ENCODE measurements at regions of chr6 and their contacts with region 1.

Region 1: DNA sequence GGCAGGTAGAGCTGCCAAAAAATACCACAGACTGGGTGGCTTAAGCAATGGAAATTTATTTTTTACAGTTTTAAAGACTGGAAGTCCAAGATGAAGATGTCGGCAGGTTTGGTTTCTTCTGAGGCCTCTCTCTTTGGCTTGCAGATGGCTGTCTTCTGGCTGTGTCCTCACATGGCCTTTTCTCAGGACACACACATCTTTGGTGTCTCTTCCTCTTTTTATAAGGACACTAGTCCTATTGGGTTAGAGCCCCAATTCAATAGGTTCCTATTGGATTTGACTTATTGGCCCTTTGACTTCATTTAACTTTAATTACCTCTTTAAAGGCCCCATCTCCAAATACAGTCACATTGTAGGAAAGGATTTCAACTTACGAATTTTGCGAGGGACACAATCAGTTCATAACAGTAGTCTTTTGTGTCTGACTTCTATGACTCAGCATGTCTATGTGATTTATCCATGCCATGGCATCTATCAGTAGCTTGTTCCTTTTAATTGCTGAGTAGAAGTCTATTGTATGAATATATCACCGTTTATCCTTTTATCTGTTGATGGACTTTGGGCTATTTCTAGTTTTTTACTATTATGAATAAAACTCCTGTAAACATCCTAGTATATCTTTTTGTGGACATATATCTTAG is 11.0 kb upstream of the TCP11 start:
- DNase-seq: no peak
- ATAC-seq: no peak
- H3K4me3 ChIP-seq: no peak overlapping the region
- H3K27ac ChIP-seq: no peak overlapping the region
- H3K4me1 ChIP-seq: no peaks in the 10 kb centered on the region
- H3K27me3 ChIP-seq: no peaks in the 10 kb centered on the region
- CTCF ChIP-seq: no peak

Region 2: GRCh38 chr6:34897130-34897529 is 255.1 kb before region 1 on chr6:
- CTCF ChIA-PET with region 1: no interaction called
- POLR2A ChIA-PET with region 1: interaction called, 15 read pairs
- in situ Hi-C with region 1: no loop called
- intact Hi-C with region 1: no loop called
- DNase-seq: no peak
- ATAC-seq: no peak
- H3K4me3 ChIP-seq: no peak overlapping the region
- H3K27ac ChIP-seq: no peak overlapping the region
- H3K4me1 ChIP-seq: peaks cover 6% of the 10 kb centered on the region; the same call in 1 of the 2 replicates
- H3K27me3 ChIP-seq: no peaks in the 10 kb centered on the region
- CTCF ChIP-seq: no peak

Region 3: GRCh38 chr6:34961574-34961973 is 190.6 kb before region 1 on chr6:
- CTCF ChIA-PET with region 1: no interaction called
- POLR2A ChIA-PET with region 1: interaction called, 10 read pairs
- in situ Hi-C with region 1: no loop called
- intact Hi-C with region 1: no loop called
- DNase-seq: no peak
- ATAC-seq: no peak
- H3K4me3 ChIP-seq: no peak overlapping the region
- H3K27ac ChIP-seq: no peak overlapping the region
- H3K4me1 ChIP-seq: no peaks in the 10 kb centered on the region
- H3K27me3 ChIP-seq: no peaks in the 10 kb centered on the region
- CTCF ChIP-seq: no peak

Region 4: DNA sequence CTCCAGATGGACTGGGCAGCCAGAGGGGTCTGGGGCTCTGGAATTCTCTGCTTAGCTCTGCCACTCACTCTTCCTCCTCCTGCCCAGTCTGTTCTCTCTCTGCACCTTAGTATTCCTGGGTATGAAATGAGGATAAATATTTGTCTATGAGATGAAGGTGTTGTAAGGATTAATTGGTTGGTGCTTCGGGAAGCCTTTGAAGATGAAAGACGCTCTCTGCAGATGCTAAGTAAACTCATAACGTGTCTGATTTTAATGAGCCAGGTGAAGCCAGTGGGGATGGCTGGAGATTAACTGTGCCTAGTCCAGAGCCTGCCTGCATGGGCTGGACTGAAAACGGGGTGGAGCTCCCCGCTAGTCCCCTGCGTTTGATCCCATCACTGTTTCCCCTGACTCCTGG is 12.1 kb after region 1 on chr6:
- CTCF ChIA-PET with region 1: interaction called, 4 read pairs
- POLR2A ChIA-PET with region 1: interaction called, 23 read pairs
- in situ Hi-C with region 1: no loop called
- intact Hi-C with region 1: no loop called
- DNase-seq: no peak
- ATAC-seq: no peak
- H3K4me3 ChIP-seq: no peak overlapping the region
- H3K27ac ChIP-seq: peak overlapping the region; percentile 17; the same call in 1 of the 2 replicates
- H3K4me1 ChIP-seq: peaks cover 7% of the 10 kb centered on the region; the same call in 1 of the 2 replicates
- H3K27me3 ChIP-seq: no peaks in the 10 kb centered on the region
- CTCF ChIP-seq: no peak

Measured in Panc1 (cell line).